HCT116 (cell line): ENCODE measurements at regions of chr1 and their contacts with region 1.

Region 1: DNA sequence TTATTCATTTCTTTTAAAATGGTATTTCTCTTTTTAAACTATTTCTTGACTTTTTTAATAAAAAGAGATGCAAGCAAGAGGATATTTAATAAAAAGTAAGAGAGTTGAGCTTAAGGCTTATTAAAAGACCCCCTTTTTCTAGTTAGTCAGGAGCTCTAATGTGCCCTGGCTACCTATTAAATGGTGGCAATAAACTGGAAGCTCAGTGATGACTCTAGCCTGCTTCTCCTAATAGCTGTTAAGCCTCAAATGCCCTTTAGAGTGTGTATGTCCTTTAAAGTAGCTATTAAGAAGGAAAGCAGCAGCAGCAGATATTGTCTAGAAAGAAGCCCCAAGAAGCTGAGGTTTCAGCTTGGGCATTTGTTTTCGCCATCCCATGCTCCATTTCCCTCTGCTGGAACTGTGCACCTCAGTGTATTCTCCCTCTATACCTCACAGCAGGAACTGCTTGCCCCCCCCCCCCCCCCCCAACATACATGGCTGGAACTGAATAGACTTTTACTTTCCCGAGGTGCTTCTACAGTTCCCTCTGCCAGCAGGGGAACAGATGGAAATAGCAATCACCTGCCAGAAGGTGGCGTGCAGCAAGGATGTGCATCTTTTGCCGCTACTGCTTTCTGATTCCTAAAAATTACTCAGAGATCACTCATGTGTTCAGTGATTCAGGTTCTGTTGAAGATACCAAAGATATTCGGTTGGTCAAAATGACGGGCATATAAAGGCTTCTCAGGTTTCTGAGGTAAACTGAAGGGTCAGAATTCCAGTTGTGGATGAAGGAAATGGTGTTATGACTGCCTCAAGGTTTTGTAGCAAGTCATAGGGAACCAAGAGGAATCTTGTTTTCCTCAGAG is 2.5 kb downstream of the RGS4 start:
- DNase-seq: peak; percentile 60
- ATAC-seq: peak; percentile 86
- H3K4me3 ChIP-seq: no peak overlapping the region
- H3K27ac ChIP-seq: no peak overlapping the region
- H3K4me1 ChIP-seq: peaks cover 0 to 16% of the 10 kb centered on the region in 2 experiments; a peak in 3 of 4 replicates
- H3K27me3 ChIP-seq: peaks cover 25% of the 10 kb centered on the region
- CTCF ChIP-seq: peak; percentile 78 to 86 (median 85)
- POLR2A ChIP-seq: no peak
- RAD21 ChIP-seq: peak; percentile 59

Region 2: DNA sequence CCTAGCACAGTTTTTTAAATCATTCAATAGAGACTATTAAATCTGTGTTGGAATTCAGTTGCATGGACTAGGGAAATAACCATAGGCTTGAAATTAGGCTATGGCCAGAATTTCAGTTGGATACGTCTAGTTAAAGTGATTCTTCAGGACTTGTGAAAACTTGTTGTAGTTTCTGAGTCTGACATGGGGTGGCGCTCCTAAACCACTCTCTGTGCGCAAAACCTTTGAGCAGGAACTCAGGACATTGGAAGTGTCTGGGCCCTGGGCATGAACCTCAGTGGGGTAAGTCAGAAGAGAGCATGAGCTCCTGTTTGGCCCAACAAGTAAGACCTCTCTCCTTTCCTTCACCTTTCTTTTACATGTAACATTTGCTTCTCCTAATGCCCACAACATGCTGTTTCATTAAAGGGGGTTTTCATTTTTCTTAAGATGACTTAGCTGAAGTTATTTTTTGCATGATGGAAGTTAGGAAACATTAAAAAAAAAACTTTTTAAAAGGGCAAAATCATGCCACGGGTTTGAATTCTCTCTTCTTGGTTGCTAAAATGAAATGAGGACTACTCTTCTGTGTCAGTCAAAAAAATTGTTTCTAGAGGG is 193.5 kb before region 1 on chr1:
- CTCF ChIA-PET with region 1: interaction called, 12 read pairs
- POLR2A ChIA-PET with region 1: no interaction called
- RAD21 ChIA-PET with region 1: interaction called in 1 of 2 experiments, 4 read pairs
- intact Hi-C with region 1: loop called (anchors 1 kb)
- DNase-seq: peak; percentile 68
- ATAC-seq: peak; percentile 93
- H3K4me3 ChIP-seq: no peak overlapping the region
- H3K27ac ChIP-seq: no peak overlapping the region
- H3K4me1 ChIP-seq: no peaks in the 10 kb centered on the region
- H3K27me3 ChIP-seq: no peaks in the 10 kb centered on the region
- CTCF ChIP-seq: peak; percentile 81 to 88 (median 85)
- POLR2A ChIP-seq: no peak
- RAD21 ChIP-seq: peak; percentile 96